Spleen (tissue), 13 donors: ENCODE measurements at regions of chr10 and their contacts with region 1.

Region 1: DNA sequence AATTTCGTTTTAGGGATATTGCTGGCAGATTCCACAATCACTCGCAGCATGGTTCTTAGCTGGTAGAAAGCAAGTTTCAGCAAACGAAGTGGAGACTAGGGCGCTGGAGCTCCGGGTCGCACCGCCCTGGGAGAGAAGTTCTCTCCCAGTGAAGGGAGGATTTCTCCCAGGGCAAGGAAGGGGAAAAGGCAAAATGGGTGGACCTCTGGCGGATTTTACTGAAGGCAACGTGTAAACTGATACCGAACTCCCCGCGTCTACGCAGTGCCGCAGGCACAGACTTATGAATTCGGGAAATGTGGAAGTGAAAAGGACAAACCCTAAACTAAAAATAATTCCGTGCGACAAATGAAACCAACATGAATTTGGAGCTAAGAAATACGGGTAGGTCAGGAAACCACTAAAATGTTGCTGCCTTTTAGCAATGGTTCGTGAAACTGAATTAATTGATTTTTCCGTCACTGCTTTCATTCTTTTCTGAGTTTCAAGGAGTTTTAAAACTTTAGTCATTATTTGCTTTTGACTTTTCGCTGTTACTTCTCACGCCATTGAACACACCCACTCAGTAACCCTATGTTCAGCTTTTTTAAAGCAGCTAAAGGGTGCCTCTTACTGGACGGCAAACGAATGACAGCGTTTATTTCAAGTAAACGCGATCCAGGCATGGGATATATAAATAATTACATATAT is at the start of gene MYOF:
- DNase-seq: no peak
- H3K4me3 ChIP-seq: peak within 1 kb of the TSS; percentile 26 to 71 (median 48)
- H3K27ac ChIP-seq: peak within 1 kb of the TSS in 7 of 8 donors; percentile 67 to 79 (median 73)
- H3K4me1 ChIP-seq: peaks cover 0 to 30% (median 14%) of the 10 kb centered on the region in 6 donors
- H3K27me3 ChIP-seq: peaks cover 0 to 23% (median 0%) of the 10 kb centered on the region in 7 donors
- CTCF ChIP-seq: peak in 10 of 11 experiments; percentile 33 to 69 (median 55)
- POLR2A ChIP-seq: no peak
- total RNA-seq, gene MYOF: 15.1 to 50.8 (median 26.8) TPM

Region 2: DNA sequence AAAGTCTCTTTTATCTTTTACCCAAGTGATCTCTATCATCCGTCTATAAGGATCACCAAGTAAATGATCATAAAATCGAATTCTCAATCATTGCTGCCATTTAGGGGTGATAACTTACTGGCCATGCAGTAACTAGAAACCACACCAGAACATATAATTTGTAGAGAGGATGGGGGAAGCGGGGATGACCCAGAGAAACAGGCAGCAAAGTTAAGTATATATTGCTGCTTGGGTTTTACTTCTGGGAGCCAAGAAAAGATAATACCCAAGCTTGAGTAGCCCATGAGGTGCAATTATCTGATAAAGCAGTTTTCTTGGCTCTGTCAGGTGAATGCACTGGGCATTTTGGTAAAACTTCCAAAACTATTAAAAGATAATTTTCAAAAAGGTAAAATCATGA is 615.1 kb before region 1 on chr10:
- intact Hi-C with region 1: no loop called
- DNase-seq: no peak
- H3K4me3 ChIP-seq: no peak overlapping the region
- H3K27ac ChIP-seq: no peak overlapping the region
- H3K4me1 ChIP-seq: peaks cover 0 to 35% (median 0%) of the 10 kb centered on the region in 6 donors
- H3K27me3 ChIP-seq: no peaks in the 10 kb centered on the region
- CTCF ChIP-seq: no peak
- POLR2A ChIP-seq: no peak

Region 3: DNA sequence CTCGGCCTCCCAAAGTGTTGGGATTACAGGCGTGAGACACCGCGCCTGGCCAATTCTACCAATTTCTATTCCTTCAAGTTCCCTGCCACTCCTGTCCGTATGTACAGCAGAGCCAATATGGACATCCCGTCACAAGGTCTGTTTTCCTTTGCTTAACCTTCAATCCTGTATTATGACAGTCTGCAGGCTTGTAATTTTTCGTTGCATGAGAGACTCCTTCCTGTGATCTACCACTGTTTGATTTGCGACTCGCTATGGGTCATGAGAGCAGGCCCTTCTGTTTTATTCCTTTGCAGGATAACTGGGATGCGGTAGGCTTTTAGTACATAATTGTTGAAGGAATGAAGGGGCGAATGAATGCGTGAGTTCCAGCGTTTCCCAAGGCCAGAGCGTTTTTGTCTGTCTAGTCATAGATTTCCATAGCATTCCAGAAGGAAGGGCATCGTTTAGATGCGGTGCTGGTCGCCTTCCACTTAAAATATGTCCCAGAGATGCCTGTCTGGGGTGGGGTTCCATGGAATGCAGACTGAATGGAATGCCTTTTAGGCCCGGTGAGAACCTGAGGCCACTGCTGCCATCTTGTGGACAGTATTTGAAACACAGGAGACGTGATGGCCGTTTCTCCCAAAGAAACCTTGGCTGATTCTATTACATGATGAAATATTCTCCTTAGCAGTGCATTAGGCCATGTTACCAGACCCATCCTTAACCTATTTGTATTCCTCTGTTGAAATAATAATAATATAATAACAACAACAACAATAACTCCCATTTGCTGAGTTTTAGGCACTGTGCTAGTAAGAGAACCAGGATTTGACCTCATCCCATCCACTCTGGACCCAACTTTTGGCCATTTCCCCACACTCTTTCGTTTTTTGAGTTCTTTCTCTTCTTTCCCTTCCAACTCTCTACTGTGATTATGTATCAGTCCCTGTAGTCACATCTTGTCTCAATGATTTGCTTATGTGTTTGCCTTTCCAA is 193.3 kb before region 1 on chr10:
- intact Hi-C with region 1: no loop called
- DNase-seq: no peak
- H3K4me3 ChIP-seq: no peak overlapping the region
- H3K27ac ChIP-seq: no peak overlapping the region
- H3K4me1 ChIP-seq: peaks cover 0 to 8% (median 0%) of the 10 kb centered on the region in 6 donors
- H3K27me3 ChIP-seq: no peaks in the 10 kb centered on the region
- CTCF ChIP-seq: peak; percentile 42 to 85 (median 71)
- POLR2A ChIP-seq: no peak

Region 4: GRCh38 chr10:93376372-93377293 is 105.7 kb before region 1 on chr10:
- intact Hi-C with region 1: loop called (anchors 2 kb)
- DNase-seq: no peak
- H3K4me3 ChIP-seq: no peak overlapping the region
- H3K27ac ChIP-seq: peak overlapping the region in 4 of 8 donors; percentile 3 to 59 (median 35)
- H3K4me1 ChIP-seq: peaks cover 0 to 16% (median 3%) of the 10 kb centered on the region in 6 donors
- H3K27me3 ChIP-seq: no peaks in the 10 kb centered on the region
- CTCF ChIP-seq: peak; percentile 64 to 92 (median 86)
- POLR2A ChIP-seq: no peak

Region 5: GRCh38 chr10:93580828-93581227 is 98.5 kb after region 1 on chr10:
- intact Hi-C with region 1: no loop called
- DNase-seq: no peak
- H3K4me3 ChIP-seq: no peak overlapping the region
- H3K27ac ChIP-seq: no peak overlapping the region
- H3K4me1 ChIP-seq: no peaks in the 10 kb centered on the region
- H3K27me3 ChIP-seq: peaks cover 0 to 42% (median 0%) of the 10 kb centered on the region in 7 donors
- CTCF ChIP-seq: no peak
- POLR2A ChIP-seq: no peak